ENCODE measurements at regions of chr6 and their contacts with region 1.

Region 1: GRCh38 chr6:36897609-36898008 is 11.9 kb downstream of the C6orf89 start:
- DNase-seq: peak; percentile 62
- ATAC-seq: peak; percentile 77
- H3K4me3 ChIP-seq: no peak overlapping the region
- H3K27ac ChIP-seq: no peak overlapping the region
- H3K4me1 ChIP-seq: no peaks in the 10 kb centered on the region
- H3K27me3 ChIP-seq: no peaks in the 10 kb centered on the region
- CTCF ChIP-seq: peak; percentile 67

Region 2: DNA sequence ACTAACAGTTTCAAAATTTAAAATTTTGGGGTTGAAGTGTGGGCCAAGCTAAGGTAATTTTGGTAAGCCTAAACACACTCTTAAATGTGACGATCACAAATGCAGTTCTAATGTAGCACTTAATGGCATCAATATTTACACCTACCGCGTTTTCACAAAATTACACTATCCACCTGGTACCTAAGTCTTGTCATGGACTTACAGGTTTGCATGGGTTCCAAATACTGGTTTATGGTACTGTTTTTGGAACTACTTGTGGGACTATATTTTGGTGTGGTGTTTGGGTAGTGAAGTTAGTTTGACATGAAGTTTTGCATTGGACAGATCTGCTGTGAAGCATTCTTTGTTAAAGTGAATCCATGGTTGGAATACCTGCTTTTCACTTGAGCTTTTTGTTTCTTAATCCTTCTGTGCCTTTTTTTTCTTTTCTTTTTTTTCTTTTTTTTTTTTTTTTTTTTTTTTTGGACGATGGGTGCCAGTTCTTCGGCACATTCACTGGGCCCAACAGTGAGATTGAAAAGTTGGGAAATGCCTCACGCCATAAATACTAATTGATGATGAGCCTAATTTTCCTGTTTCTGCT is 297.0 kb before region 1 on chr6:
- CTCF ChIA-PET with region 1: interaction called, 11 read pairs
- POLR2A ChIA-PET with region 1: no interaction called
- intact Hi-C with region 1: no loop called
- DNase-seq: no peak
- ATAC-seq: no peak
- H3K4me3 ChIP-seq: no peak overlapping the region
- H3K27ac ChIP-seq: no peak overlapping the region
- H3K4me1 ChIP-seq: peaks cover 34% of the 10 kb centered on the region
- H3K27me3 ChIP-seq: no peaks in the 10 kb centered on the region
- CTCF ChIP-seq: no peak

Region 3: GRCh38 chr6:36827261-36828079 is 70.1 kb before region 1 on chr6:
- CTCF ChIA-PET with region 1: no interaction called
- POLR2A ChIA-PET with region 1: no interaction called
- intact Hi-C with region 1: no loop called
- DNase-seq: peak; percentile 80
- ATAC-seq: peak; percentile 54
- H3K4me3 ChIP-seq: no peak overlapping the region
- H3K27ac ChIP-seq: no peak overlapping the region
- H3K4me1 ChIP-seq: peaks cover 11% of the 10 kb centered on the region
- H3K27me3 ChIP-seq: no peaks in the 10 kb centered on the region
- CTCF ChIP-seq: no peak